Endothelial cell of umbilical vein (primary cell): ENCODE measurements at regions of chr16 and their contacts with region 1.

Region 1: GRCh38 chr16:67816240-67817031 is 9.7 kb downstream of the TSNAXIP1 start:
- DNase-seq: peak; percentile 70
- H3K4me3 ChIP-seq: no peak overlapping the region
- H3K27ac ChIP-seq: no peak overlapping the region
- H3K4me1 ChIP-seq: no peaks in the 10 kb centered on the region
- H3K27me3 ChIP-seq: no peaks in the 10 kb centered on the region
- CTCF ChIP-seq: peak; percentile 100
- POLR2A ChIP-seq: no peak

Region 2: GRCh38 chr16:67521095-67521804 is 295.2 kb before region 1 on chr16:
- CTCF ChIA-PET with region 1: interaction called, 15 read pairs
- POLR2A ChIA-PET with region 1: no interaction called
- dilution Hi-C with region 1: no loop called
- intact Hi-C with region 1: no loop called
- DNase-seq: peak; percentile 97
- H3K4me3 ChIP-seq: peak overlapping the region in 2 of 3 experiments; percentile 30 to 45
- H3K27ac ChIP-seq: peak overlapping the region; percentile 89
- H3K4me1 ChIP-seq: peaks cover 11% of the 10 kb centered on the region
- H3K27me3 ChIP-seq: no peaks in the 10 kb centered on the region
- CTCF ChIP-seq: peak; percentile 83 to 100
- POLR2A ChIP-seq: peak; percentile 68

Region 3: DNA sequence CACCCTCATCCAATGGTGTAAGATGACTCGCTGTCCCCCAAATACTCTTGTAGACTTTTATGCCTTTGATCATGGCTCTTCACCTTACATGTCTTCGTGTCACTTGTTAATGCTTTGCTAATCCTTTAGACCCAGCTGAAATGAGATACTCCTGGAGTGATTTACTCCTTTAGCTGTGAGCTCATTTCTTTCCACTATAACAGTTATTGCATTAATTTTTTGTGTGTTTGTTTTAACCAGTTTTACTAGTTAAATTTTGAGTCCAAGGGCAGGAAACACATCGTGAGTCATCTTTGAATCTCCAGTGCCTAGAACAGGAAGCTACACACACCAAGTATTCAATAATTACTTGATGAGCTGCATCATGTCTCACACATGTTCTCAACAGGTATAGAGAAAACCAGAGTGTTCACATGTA is 260.6 kb before region 1 on chr16:
- CTCF ChIA-PET with region 1: no interaction called
- POLR2A ChIA-PET with region 1: no interaction called
- dilution Hi-C with region 1: no loop called
- intact Hi-C with region 1: no loop called
- DNase-seq: peak; percentile 74
- H3K4me3 ChIP-seq: no peak overlapping the region
- H3K27ac ChIP-seq: peak overlapping the region; percentile 73
- H3K4me1 ChIP-seq: peaks cover 17% of the 10 kb centered on the region
- H3K27me3 ChIP-seq: no peaks in the 10 kb centered on the region
- CTCF ChIP-seq: no peak
- POLR2A ChIP-seq: no peak

Region 4: DNA sequence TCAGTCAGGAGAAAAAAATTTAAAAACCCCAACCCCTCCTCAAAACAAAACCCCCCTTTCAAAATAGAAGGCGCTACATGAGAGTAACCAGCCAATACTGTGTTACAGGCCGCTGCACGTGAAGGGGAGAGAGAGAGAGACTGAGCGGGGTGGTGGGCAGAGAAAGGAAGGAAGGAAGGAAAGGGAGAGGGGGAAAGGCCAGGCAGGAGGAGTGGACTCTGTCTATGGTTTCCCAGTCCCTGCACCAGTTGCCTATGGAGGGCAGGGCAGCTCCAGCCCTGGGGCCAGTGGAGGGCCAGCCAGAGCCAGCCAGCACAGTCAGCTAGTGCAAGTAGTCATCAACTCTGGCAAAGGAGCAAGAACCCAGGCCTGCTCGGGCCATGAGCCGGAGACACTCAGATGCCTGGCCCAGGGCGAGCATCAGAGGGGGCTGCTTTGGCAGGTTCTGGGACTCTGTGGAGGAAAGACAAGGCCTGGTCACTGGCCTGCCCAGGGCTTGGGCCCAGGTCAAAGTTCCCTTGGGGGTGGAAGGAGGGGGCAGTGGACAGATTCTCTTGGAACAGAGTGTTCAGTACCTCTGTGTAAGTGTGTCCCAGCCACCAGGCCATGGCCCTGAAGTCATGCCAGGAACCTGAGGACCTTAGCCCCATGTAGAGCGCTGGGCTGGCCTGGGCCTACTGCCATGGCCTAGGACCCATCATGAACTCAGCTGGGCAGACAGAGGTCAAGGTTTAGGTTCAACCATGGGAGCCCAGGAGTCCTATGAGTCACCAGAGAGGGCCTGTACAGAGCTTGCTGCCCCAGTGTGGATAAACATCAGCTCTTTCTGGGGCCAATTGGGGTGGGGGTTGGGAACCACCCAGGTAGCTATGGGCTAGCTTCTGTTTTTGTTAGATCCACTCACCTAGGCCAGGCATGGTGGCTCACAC is 90.1 kb before region 1 on chr16:
- CTCF ChIA-PET with region 1: interaction called, 11 read pairs
- POLR2A ChIA-PET with region 1: no interaction called
- dilution Hi-C with region 1: no loop called
- intact Hi-C with region 1: no loop called
- DNase-seq: peak; percentile 30
- H3K4me3 ChIP-seq: no peak overlapping the region
- H3K27ac ChIP-seq: no peak overlapping the region
- H3K4me1 ChIP-seq: no peaks in the 10 kb centered on the region
- H3K27me3 ChIP-seq: no peaks in the 10 kb centered on the region
- CTCF ChIP-seq: no peak
- POLR2A ChIP-seq: no peak

Region 5: GRCh38 chr16:67841764-67842508 is 25.5 kb after region 1 on chr16 and contains the start of gene THAP11:
- CTCF ChIA-PET with region 1: interaction called, 32 read pairs
- POLR2A ChIA-PET with region 1: no interaction called
- dilution Hi-C with region 1: no loop called
- intact Hi-C with region 1: loop called (anchors 2 kb)
- DNase-seq: peak; percentile 95
- H3K4me3 ChIP-seq: peak within 1 kb of the TSS; percentile 32 to 58 (median 57)
- H3K27ac ChIP-seq: peak within 1 kb of the TSS; percentile 77
- H3K4me1 ChIP-seq: peaks cover 26% of the 10 kb centered on the region
- H3K27me3 ChIP-seq: no peaks in the 10 kb centered on the region
- CTCF ChIP-seq: peak; percentile 82 to 93
- POLR2A ChIP-seq: peak; percentile 44
- total RNA-seq, gene THAP11: 22.6 and 24.0 TPM in 2 replicates

Region 6: GRCh38 chr16:67872786-67873537 is 56.5 kb after region 1 on chr16 and contains the start of gene EDC4:
- CTCF ChIA-PET with region 1: interaction called, 16 read pairs
- POLR2A ChIA-PET with region 1: no interaction called
- dilution Hi-C with region 1: no loop called
- intact Hi-C with region 1: loop called (anchors 2 kb)
- DNase-seq: peak; percentile 78
- H3K4me3 ChIP-seq: peak within 1 kb of the TSS; percentile 66 to 79 (median 67)
- H3K27ac ChIP-seq: peak within 1 kb of the TSS; percentile 40
- H3K4me1 ChIP-seq: peaks cover 15% of the 10 kb centered on the region
- H3K27me3 ChIP-seq: no peaks in the 10 kb centered on the region
- CTCF ChIP-seq: no peak
- POLR2A ChIP-seq: peak; percentile 91
- total RNA-seq, gene EDC4: 68.0 and 81.2 TPM in 2 replicates

Region 7: GRCh38 chr16:67935402-67936123 is 119.1 kb after region 1 on chr16:
- CTCF ChIA-PET with region 1: interaction called, 27 read pairs
- POLR2A ChIA-PET with region 1: no interaction called
- dilution Hi-C with region 1: no loop called
- intact Hi-C with region 1: no loop called
- DNase-seq: peak; percentile 91
- H3K4me3 ChIP-seq: peak overlapping the region; percentile 31 to 88 (median 58)
- H3K27ac ChIP-seq: peak overlapping the region; percentile 36
- H3K4me1 ChIP-seq: peaks cover 13% of the 10 kb centered on the region
- H3K27me3 ChIP-seq: no peaks in the 10 kb centered on the region
- CTCF ChIP-seq: no peak
- POLR2A ChIP-seq: peak; percentile 71

Region 8: GRCh38 chr16:68064791-68065365 is 248.4 kb after region 1 on chr16:
- CTCF ChIA-PET with region 1: interaction called, 18 read pairs
- POLR2A ChIA-PET with region 1: no interaction called
- dilution Hi-C with region 1: no loop called
- intact Hi-C with region 1: no loop called
- DNase-seq: peak; percentile 77
- H3K4me3 ChIP-seq: no peak overlapping the region
- H3K27ac ChIP-seq: no peak overlapping the region
- H3K4me1 ChIP-seq: peaks cover 19% of the 10 kb centered on the region
- H3K27me3 ChIP-seq: no peaks in the 10 kb centered on the region
- CTCF ChIP-seq: peak; percentile 80 to 83
- POLR2A ChIP-seq: no peak